CD4-positive, alpha-beta memory T cell (primary cell): ENCODE measurements at regions of chr19 and their contacts with region 1.

Region 1: DNA sequence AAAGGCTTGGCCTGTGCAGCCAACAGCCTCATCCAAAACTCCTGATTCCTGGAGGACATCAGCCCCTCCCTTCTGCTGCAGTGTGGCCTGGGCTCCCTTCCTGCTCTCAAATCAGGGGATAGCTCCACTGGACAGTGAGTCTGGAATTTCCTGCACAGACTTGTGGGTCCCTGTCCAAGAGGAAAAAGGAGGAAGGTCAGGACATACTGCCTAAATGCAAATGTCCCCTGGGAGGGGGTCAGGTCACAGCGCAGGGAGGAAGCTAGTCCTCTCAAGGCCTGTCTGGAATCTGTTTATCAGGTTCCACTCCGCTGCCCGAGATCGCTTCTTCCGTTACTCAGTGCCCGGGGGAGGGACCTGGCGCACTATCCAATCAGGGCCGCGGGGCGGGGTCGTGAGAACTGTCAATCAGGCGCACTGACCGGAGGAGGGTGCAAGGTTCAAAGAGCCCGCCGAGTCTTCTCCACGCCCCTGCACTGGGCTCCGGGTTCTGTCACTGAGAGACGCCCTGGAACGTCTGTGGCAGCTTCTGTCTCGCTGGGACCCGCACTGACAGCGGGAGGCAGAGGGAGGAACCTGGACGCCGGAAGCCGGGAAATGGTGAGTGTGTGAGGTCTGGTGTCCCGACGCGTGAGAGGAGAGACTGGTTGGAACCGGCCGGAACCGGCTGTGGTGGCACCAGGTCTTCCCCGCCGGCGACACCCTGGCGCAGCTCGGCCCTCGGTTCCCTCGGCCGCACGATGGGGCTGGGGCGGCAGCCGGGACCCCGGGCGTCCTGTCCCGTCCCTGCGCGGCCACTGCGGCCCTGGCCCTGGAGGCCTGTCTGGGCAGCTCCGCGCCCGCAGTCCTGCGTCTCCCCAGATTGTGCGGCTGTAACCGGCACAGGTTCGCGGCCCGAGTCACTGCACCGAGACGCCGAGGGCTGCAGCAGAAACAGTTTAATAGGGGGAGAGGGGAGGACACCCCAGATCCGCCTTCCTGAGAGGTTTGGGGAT is at the start of gene ZNF441:
- DNase-seq: peak; percentile 84 to 89 (median 85)
- H3K4me3 ChIP-seq: peak within 1 kb of the TSS; percentile 84 to 94
- H3K4me3 Mint-ChIP-seq: peak within 1 kb of the TSS; percentile 95 to 99 (median 98)
- H3K27ac ChIP-seq: peak within 1 kb of the TSS; percentile 54
- H3K27ac Mint-ChIP-seq: peak within 1 kb of the TSS; percentile 92 to 97 (median 94)
- H3K4me1 ChIP-seq: peaks cover 21% of the 10 kb centered on the region
- H3K4me1 Mint-ChIP-seq: peaks cover 17 to 33% (median 23%) of the 10 kb centered on the region in 4 donors
- H3K27me3 ChIP-seq: no peaks in the 10 kb centered on the region
- H3K27me3 Mint-ChIP-seq: peaks cover 0 to 4% of the 10 kb centered on the region in 2 donors
- total RNA-seq, gene ZNF441: 19.6 to 21.5 TPM

Region 2: GRCh38 chr19:11738746-11739620 is 27.9 kb before region 1 on chr19 and contains the start of gene ZNF823:
- CTCF ChIA-PET with region 1: no interaction called
- POLR2A ChIA-PET with region 1: interaction called, 5 read pairs
- intact Hi-C with region 1: loop called (anchors 1 kb)
- DNase-seq: peak; percentile 94 to 97 (median 95)
- H3K4me3 ChIP-seq: peak within 1 kb of the TSS; percentile 45 to 80
- H3K4me3 Mint-ChIP-seq: peak within 1 kb of the TSS; percentile 96 to 100 (median 99)
- H3K27ac ChIP-seq: peak within 1 kb of the TSS; percentile 63
- H3K27ac Mint-ChIP-seq: peak within 1 kb of the TSS; percentile 77 to 99 (median 97)
- H3K4me1 ChIP-seq: peaks cover 15% of the 10 kb centered on the region
- H3K4me1 Mint-ChIP-seq: peaks cover 15 to 30% (median 17%) of the 10 kb centered on the region in 4 donors
- H3K27me3 ChIP-seq: no peaks in the 10 kb centered on the region
- H3K27me3 Mint-ChIP-seq: no peaks in the 10 kb centered on the region
- total RNA-seq, gene ZNF823: 4.6 to 5.4 TPM

Region 3: GRCh38 chr19:11814029-11814699 is 47.3 kb after region 1 on chr19 and contains the start of gene ZNF440:
- CTCF ChIA-PET with region 1: no interaction called
- POLR2A ChIA-PET with region 1: interaction called, 3 read pairs
- intact Hi-C with region 1: loop called (anchors 2 kb)
- DNase-seq: peak; percentile 74 to 82 (median 74)
- H3K4me3 ChIP-seq: peak within 1 kb of the TSS; percentile 64 to 89
- H3K4me3 Mint-ChIP-seq: peak within 1 kb of the TSS; percentile 93 to 96 (median 95)
- H3K27ac ChIP-seq: peak within 1 kb of the TSS; percentile 56
- H3K27ac Mint-ChIP-seq: peak within 1 kb of the TSS; percentile 55 to 91 (median 86)
- H3K4me1 ChIP-seq: peaks cover 17% of the 10 kb centered on the region
- H3K4me1 Mint-ChIP-seq: peaks cover 13 to 29% (median 21%) of the 10 kb centered on the region in 4 donors
- H3K27me3 ChIP-seq: no peaks in the 10 kb centered on the region
- H3K27me3 Mint-ChIP-seq: no peaks in the 10 kb centered on the region
- total RNA-seq, gene ZNF440: 18.0 to 18.5 TPM